ENCODE measurements at regions of chr2 and their contacts with region 1.

Region 1: DNA sequence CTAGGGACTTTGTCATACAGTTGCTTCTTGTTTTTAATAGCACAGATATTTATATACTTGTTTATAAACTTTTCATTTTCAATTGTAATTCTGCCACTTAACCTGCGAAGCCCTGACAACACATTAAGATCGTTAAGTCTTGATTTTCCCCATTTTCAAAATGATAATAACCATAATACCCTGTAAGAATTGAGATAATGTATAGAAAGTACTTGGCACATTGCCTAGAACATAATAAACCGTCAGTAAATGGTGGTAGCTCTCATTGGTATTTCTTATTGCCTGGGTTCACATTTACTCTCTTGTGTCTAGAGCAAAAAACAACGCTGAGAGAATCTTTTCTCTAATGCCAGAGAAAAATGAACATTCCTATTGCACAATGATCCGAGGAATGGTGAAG is 18.6 kb downstream of the PTCD3 start:
- DNase-seq: no peak
- ATAC-seq: no peak

Region 2: DNA sequence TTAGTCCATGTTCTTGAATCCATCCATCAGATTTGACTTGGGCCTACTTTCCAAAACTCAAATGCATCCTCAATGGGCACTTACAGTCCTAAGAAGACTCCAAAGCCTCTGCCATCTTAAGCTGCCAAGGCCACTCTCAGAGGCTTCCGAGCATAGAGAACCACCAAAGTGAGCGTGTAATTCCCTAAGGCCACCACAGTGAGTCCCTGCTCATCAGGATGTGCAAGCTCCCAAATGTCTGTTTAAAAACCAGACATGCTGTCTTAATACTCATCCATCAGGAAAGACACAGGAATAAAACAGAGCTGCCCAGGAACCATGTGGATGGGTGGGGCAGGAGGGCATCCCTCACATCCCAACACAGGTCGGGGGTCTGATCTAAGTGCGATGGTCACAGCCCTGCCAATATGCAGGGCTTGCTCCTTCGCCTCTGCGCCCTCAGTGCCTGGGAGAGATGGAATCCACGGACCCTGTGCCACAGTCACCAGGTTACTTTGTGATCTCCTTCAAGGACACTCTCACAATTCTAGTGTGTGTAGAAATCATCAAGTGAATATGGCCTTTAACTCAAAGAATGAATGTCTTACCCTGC is 99.4 kb before region 1 on chr2:
- intact Hi-C with region 1: no loop called
- DNase-seq: no peak
- ATAC-seq: no peak

Region 3: GRCh38 chr2:86160156-86160952 is 35.7 kb after region 1 on chr2:
- intact Hi-C with region 1: loop called (anchors 5 kb)
- DNase-seq: no peak
- ATAC-seq: no peak

Region 4: GRCh38 chr2:86176597-86176996 is 51.9 kb after region 1 on chr2:
- intact Hi-C with region 1: no loop called
- DNase-seq: no peak
- ATAC-seq: no peak

Measured in Right ventricle myocardium superior (tissue), 1 donor.